Activated T-helper 1 cell treated with anti-CD3 and anti-CD28 coated beads, Interleukin-12 subunit alpha, Interleukin-12 subunit beta, Interleukin-2, Interleukin-4 antibody, amounts not matched to agents 30 ng/mL and 10 ng/mL and 1 ng/mL, durations not matched to agents 14 hours and 24 hours and 36 hours (primary cell): ENCODE measurements at regions of chr20 and their contacts with region 1.

Region 1: DNA sequence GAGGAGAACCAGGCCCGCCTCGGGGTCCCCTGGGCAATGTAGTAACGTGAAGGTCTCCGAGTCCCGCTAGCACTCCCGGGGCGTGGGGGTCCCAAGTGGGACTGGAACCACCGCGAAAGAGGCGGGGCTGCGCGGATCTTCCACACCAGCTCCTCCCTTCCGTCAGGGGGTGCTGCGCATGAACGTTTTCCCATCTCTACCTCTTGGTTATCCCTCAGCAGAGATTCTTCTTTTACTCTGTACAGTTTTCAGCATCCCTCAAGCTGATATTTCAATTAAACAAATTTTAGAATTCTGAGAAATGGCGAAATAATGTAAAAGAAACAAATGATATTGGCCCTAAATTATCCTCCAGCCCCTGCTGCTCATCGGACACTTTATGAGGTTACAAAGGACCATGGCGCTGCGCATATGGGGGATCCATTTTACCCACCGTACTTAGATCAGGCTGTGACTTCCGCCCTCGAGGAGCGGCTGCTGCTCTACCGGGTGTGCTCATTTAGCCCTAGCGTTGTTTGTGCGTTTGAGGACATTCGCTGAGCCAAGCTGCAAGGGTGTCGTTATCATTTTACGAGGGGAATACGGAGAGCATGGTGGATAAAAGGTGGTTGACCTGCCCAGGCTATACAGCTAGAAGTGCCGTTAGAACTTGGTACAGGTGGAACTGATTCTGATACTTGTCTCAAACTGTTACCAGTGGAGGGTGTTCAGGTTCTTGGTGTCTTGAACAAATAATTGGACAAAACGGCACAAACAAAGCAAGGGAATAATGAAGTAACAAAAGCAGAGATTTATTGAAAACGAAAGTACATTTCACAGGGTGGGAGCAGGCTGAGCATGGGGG is 75.2 kb upstream of the CHD6 start:
- DNase-seq: peak; percentile 73
- H3K4me3 Mint-ChIP-seq: peak overlapping the region; percentile 93
- H3K27ac Mint-ChIP-seq: peak overlapping the region; percentile 94
- H3K4me1 Mint-ChIP-seq: peaks cover 13% of the 10 kb centered on the region
- H3K27me3 Mint-ChIP-seq: peaks cover 3% of the 10 kb centered on the region

Region 2: DNA sequence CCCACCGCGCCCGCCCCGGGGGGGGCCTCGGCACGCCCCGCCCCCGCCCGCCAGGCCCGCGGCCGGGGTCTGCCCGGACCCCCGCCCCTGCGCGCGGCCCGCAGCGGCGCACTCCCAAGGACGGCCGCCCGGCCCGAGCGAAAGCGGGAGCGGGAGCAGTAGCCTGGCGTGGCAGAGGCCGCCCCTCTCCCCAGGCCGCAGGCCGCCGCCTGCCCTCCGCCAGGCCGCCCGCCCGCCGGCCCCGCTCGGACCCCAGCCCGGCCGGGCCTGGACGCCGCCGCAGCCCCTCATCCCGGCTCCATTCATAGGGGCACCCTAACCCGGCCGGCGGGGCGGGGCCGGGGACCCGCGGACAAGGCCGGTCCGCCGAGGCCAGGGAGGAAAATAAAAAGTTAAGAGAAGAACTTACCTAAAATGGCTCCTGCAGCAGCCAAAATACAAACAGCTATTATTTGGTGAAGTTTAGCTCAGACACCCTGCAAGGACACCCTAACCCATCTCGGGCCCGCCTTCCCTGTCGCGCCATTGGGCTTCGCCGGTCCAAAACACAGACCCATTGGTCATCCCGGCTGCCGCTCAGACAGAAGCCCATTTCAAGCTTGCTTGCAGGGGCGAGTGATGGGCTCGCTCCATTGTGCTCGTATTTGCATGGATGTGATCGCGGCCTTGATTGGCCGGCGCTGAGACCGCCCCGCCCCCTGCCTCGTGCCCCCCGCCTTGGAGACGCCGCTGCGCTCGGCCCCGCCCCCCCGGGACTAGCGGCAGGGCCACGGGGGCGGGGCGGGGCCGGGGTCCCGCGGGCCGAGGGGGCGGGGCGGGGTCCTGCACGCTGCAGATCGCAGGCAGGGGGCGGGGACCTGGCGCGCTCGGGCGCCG is 75.2 kb before region 1 on chr20 and contains the start of gene CHD6:
- intact Hi-C with region 1: loop called (anchors 1 kb)
- DNase-seq: peak; percentile 99
- H3K4me3 Mint-ChIP-seq: peak within 1 kb of the TSS; percentile 94
- H3K27ac Mint-ChIP-seq: peak within 1 kb of the TSS; percentile 89
- H3K4me1 Mint-ChIP-seq: peaks cover 40% of the 10 kb centered on the region
- H3K27me3 Mint-ChIP-seq: peaks cover 16% of the 10 kb centered on the region
- total RNA-seq, gene CHD6: 34.3 and 36.8 TPM in 2 replicates

Region 3: DNA sequence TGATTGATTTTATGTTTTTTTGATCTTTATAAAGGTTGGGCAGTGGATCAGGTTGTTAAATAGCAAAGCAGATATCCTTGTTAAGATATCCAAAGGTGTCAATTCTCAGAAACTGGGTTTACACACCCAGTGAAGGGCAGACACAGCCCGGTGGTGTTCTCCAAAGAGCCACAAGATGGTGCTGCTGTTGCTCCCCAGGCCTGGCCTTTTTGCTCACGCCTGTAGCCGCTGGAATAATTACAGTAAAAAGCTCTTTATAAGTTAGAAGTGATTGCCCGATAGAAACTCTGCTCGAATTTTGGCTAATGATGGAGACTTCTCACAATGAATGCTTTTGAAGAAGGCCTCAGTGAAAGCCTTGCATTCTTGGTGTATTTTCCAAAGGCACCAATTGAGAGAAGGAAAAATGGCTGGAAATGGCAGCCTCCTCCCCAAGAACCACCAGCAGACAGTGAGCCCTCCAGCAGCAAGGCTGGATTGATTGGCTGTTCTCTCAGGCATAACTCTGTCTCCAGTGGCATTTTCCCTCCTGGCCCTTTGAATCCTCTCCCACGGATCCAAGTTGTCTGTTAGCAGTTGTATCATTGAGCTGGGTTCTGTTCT is 45.3 kb after region 1 on chr20:
- intact Hi-C with region 1: no loop called
- DNase-seq: peak; percentile 4
- H3K4me3 Mint-ChIP-seq: no peak overlapping the region
- H3K27ac Mint-ChIP-seq: no peak overlapping the region
- H3K4me1 Mint-ChIP-seq: no peaks in the 10 kb centered on the region
- H3K27me3 Mint-ChIP-seq: peaks cover 2% of the 10 kb centered on the region

Region 4: DNA sequence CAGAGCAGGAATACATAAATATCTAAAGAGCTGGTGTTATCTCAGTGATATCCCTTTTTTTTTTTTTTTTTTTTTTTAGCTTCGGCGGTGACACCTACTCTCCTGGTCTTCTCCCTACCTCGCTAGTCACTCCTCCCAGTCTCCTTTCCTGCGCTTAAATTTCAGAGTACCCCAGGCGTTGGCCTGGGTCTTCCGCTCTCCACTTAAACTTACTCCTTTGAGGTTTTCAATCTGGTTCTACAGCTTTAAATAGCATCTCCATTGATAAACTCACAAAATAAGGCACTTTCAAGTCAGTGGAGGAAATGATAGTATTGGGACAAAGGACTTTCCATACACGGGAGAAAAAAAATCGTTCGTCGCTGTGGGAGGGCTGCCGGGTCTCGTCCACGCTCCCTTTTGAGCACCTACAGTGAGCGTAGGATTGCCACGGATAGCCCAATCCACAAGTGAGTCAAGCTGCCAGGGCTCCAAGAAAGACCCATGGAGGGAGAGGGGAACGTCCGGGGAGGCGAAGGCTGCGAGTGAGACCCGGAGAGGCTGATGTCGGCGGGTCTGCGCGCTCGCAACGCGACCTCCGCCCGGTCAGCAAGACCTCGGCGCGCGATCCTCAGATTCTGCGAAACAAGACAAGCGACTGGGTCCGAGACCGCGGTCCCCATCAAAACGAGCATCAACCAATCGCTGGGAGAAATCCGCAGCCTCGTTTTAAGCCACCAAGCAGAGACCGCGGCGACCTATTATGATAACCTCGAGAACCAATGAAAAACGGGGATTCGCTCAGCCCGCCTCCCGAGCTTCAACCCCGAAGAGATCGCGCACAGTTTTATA is 1763.7 kb after region 1 on chr20:
- intact Hi-C with region 1: loop called (anchors 1 kb)
- DNase-seq: peak; percentile 83
- H3K4me3 Mint-ChIP-seq: peak overlapping the region; percentile 88
- H3K27ac Mint-ChIP-seq: peak overlapping the region; percentile 100
- H3K4me1 Mint-ChIP-seq: peaks cover 34% of the 10 kb centered on the region
- H3K27me3 Mint-ChIP-seq: peaks cover 17% of the 10 kb centered on the region